ENCODE measurements at regions of chr1 and their contacts with region 1.

Region 1: DNA sequence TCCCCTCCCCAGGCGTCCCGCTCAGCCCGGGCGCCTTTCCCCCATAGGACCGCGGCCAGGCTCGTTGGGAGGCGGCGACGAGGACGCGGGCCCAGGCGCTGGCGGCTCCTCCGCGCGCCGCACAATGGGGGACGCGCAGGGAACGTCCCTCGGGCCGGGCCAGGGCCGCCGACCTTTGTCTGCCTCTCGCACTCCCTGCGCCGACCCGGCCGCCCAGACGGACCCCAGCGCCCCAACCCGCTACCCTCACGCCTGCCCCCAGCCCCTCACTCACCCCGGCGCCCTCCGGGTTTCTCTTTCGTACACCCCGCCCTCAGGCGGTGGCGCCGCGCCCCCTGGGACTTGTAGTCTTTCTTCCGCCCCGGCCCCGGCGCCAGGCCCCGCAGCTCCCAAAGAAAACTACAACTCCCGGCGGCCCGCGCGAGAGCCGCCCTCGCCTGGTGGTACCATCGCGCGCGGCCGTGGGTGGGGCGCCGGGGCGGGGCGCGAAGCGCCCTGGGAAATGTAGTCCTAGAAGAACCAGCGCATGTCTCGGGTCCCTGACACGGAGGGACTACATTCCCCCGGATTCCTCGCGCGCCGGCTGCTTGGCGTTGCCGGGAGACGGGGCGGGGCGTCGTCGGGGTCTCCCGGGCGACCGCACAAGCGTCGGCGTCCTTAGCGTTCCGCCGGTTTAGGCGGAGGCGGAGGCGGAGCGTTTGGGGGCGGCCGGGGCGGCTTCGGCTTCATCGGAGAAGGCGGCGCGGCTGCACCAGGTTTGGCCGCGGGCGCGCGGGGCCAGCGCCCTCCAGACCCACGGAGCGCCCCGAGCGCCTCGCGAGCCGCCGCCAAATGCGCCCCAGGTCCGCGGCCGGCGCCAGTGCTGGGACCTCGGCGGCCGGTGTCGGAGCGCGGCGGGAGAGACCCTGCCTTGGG is at the start of gene C1orf159:
- DNase-seq: peak; percentile 96 to 99 (median 98)
- ATAC-seq: peak; percentile 97
- H3K4me3 ChIP-seq: peak within 1 kb of the TSS; percentile 59
- H3K4me3 Mint-ChIP-seq: peak within 1 kb of the TSS; percentile 74 to 90 (median 86)
- H3K27ac ChIP-seq: peak within 1 kb of the TSS; percentile 76
- H3K27ac Mint-ChIP-seq: peak within 1 kb of the TSS in 7 of 9 donors; percentile 66 to 90 (median 77)
- H3K4me1 ChIP-seq: peaks cover 0 to 4% of the 10 kb centered on the region in 2 donors
- H3K4me1 Mint-ChIP-seq: peaks cover 0 to 20% (median 13%) of the 10 kb centered on the region in 7 donors
- H3K27me3 ChIP-seq: no peaks in the 10 kb centered on the region
- H3K27me3 Mint-ChIP-seq: peaks cover 0 to 13% (median 0%) of the 10 kb centered on the region in 5 donors
- total RNA-seq, gene C1orf159: 17.6 to 21.9 (median 19.6) TPM

Region 2: DNA sequence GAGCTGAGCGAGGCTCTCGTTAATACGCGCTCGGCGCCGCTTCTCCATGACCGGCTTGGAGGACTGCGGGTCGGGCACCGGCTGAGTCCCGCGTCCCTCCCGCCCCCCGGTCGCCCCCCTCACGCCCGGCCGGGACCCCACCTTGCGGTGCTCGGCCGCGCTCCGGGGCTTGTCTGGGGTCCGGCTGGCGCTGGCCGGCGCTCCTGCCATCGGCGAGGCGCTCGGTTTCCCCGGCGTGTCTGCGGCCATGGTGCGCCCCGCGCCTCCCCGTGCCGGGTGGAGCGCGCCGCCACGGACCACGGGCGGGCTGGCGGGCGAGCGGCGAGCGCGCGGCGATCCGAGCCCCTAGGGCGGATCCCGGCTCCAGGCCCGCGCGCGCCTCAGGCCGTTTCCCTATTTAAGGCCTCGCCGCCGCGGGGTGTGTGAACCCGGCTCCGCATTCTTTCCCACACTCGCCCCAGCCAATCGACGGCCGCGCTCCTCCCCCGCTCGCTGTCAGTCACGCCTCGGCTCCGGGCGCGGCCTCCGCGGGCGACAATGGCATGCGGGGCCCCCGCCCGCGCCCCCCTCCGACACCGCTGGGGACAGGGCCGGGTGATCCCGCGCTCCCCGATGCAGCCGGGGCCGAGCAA is 116.2 kb before region 1 on chr1 and contains the start of gene HES4:
- CTCF ChIA-PET with region 1: no interaction called
- POLR2A ChIA-PET with region 1: no interaction called
- intact Hi-C with region 1: loop called in 1 of 2 experiments (anchors 1 kb)
- DNase-seq: peak; percentile 44 to 76 (median 60)
- ATAC-seq: peak; percentile 67
- H3K4me3 ChIP-seq: peak within 1 kb of the TSS; percentile 42
- H3K4me3 Mint-ChIP-seq: peak within 1 kb of the TSS; percentile 64 to 87 (median 80)
- H3K27ac ChIP-seq: peak within 1 kb of the TSS; percentile 64
- H3K27ac Mint-ChIP-seq: peak within 1 kb of the TSS in 7 of 9 donors; percentile 46 to 96 (median 90)
- H3K4me1 ChIP-seq: peaks cover 12 to 18% of the 10 kb centered on the region in 2 donors
- H3K4me1 Mint-ChIP-seq: peaks cover 5 to 31% (median 12%) of the 10 kb centered on the region in 7 donors
- H3K27me3 ChIP-seq: peaks cover 3 to 15% of the 10 kb centered on the region in 2 donors
- H3K27me3 Mint-ChIP-seq: peaks cover 8 to 54% (median 17%) of the 10 kb centered on the region in 5 donors
- total RNA-seq, gene HES4: 0.22 to 35.0 (median 18.8) TPM in 3 of 5 experiments, not detected in the others

Region 3: DNA sequence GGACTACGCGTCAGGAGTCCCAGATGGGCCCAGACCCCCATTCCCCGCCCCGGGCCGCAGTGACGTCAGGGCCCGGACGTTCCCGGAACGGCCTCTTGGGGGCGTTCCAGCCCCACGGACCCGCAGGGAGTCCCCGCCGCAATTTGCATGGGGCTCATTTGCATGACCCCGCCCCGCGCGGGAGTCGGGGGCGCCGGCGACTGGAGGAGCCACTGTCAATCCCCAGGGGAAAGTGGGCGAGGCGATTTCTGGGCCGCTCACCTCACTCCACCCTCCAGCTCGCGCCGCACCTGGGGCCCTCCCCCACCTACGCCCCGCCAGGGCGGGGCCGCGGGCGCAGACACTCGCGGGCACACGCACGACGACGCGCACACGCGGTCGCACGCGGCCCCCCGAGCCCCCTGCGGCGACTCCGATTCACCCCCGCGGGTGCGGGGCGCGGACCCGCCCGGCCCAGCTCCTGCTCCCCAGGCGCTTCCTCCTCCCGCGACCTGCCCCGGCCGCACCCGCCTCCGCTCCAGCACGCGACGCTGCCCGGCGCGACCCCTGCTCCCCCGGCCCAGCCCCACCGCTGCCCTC is 82.9 kb before region 1 on chr1:
- CTCF ChIA-PET with region 1: no interaction called
- POLR2A ChIA-PET with region 1: no interaction called
- intact Hi-C with region 1: loop called (anchors 1 kb)
- DNase-seq: peak; percentile 67 to 93 (median 79)
- ATAC-seq: peak; percentile 94
- H3K4me3 ChIP-seq: peak overlapping the region; percentile 43
- H3K4me3 Mint-ChIP-seq: peak overlapping the region in 7 of 10 donors; percentile 39 to 76 (median 62)
- H3K27ac ChIP-seq: no peak overlapping the region
- H3K27ac Mint-ChIP-seq: peak overlapping the region in 1 of 9 donors; percentile 52
- H3K4me1 ChIP-seq: peaks cover 0 to 5% of the 10 kb centered on the region in 2 donors
- H3K4me1 Mint-ChIP-seq: peaks cover 0 to 8% (median 6%) of the 10 kb centered on the region in 7 donors
- H3K27me3 ChIP-seq: peaks cover 0 to 16% of the 10 kb centered on the region in 2 donors
- H3K27me3 Mint-ChIP-seq: peaks cover 3 to 23% (median 14%) of the 10 kb centered on the region in 5 donors

Region 4: DNA sequence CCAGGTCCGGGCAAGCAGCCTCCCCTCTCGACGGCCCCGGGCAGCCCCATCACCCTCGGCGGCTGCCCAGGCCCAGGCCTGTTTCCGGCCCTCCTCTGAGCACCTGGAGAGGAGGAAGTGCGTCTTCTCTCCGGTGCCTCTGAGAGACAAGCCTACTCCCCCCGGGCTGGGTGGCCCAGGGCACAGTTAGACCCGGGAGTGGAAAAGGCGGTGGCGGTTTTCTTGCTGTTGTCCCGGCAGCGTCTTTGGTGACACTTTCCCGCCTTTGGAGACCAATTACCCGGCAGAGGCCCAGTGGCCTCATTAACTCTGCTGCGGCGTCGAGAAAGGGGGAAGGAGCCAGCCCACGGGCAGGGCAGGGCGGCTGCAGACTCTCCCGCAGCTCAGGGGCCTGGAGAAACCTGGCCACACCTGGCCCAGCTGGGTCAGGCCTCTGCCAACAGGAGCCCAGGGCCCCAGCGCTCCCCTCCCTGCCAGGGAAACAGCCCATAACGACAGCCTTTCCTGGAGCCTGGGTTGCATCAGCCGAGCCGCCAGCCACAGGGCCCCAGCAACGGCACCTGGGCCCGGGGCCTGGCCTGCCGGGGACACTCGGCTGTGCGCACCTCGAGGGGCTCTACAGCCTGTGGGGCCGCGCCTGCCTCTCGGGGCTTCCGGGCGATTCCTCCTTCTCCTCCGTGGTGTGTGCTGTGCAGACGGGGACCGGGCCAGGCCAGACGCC is 28.2 kb after region 1 on chr1:
- CTCF ChIA-PET with region 1: no interaction called
- POLR2A ChIA-PET with region 1: interaction called, 3 read pairs
- intact Hi-C with region 1: loop called in 1 of 2 experiments (anchors 1 kb)
- DNase-seq: peak; percentile 40 to 79 (median 75)
- ATAC-seq: peak; percentile 93
- H3K4me3 ChIP-seq: no peak overlapping the region
- H3K4me3 Mint-ChIP-seq: peak overlapping the region; percentile 48 to 75 (median 61)
- H3K27ac ChIP-seq: peak overlapping the region; percentile 83
- H3K27ac Mint-ChIP-seq: peak overlapping the region; percentile 94 to 99 (median 96)
- H3K4me1 ChIP-seq: peaks cover 0 to 21% of the 10 kb centered on the region in 2 donors
- H3K4me1 Mint-ChIP-seq: peaks cover 6 to 21% (median 8%) of the 10 kb centered on the region in 7 donors
- H3K27me3 ChIP-seq: no peaks in the 10 kb centered on the region
- H3K27me3 Mint-ChIP-seq: no peaks in the 10 kb centered on the region

Region 5: GRCh38 chr1:1173793-1174415 is 57.9 kb after region 1 on chr1 and contains the start of gene TTLL10:
- CTCF ChIA-PET with region 1: no interaction called
- POLR2A ChIA-PET with region 1: no interaction called
- intact Hi-C with region 1: no loop called
- DNase-seq: peak in 7 of 9 donors; percentile 31 to 70 (median 54)
- ATAC-seq: peak; percentile 70
- H3K4me3 ChIP-seq: peak within 1 kb of the TSS; percentile 24
- H3K4me3 Mint-ChIP-seq: peak within 1 kb of the TSS in 7 of 10 donors; percentile 6 to 58 (median 33)
- H3K27ac ChIP-seq: no peak within 1 kb of the TSS
- H3K27ac Mint-ChIP-seq: peak within 1 kb of the TSS in 1 of 9 donors; percentile 49
- H3K4me1 ChIP-seq: peaks cover 6 to 18% of the 10 kb centered on the region in 2 donors
- H3K4me1 Mint-ChIP-seq: peaks cover 7 to 25% (median 9%) of the 10 kb centered on the region in 7 donors
- H3K27me3 ChIP-seq: no peaks in the 10 kb centered on the region
- H3K27me3 Mint-ChIP-seq: peaks cover 4 to 23% (median 4%) of the 10 kb centered on the region in 5 donors
- total RNA-seq, gene TTLL10: 0.58 to 0.80 TPM in 2 of 5 experiments, not detected in the others

Region 6: DNA sequence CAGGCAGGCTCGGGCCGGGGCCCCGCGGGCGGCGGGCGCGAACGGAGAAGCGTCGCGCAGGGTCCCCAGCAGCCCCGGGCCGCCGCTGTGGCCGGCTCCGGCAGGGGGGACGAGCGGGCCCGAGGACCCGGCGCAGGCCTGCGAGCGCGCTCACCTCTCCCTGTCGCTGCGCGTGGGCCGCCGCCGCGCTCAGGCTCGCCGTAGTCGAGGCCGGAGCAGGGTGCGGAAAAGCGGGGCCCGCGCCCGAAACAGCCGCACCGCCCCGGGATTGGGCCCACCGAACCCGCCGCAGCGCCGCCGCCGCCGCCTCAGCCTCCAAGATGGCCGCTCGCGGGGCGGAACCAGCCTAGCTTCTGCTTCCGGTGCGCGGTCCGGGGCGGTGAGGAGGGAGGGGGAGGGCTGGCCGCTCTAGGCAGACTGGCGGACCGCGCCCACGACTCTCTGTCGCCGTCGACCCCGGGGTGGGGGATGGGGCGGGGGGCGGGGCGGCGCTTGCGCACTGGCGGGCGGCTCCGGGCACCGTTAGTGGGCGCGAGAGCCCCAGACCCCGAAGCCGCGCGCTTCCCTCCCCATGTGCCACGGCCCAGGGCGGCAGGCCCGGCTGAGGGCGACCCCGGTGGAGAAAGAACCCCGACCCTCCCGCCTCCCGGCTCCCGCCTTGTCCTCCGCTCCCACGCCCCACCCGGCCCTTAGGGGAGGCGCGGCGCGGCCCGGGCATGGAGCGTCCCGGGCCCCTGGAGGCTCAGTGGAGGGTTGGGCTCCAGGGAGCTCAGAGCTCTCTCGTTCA is 157.7 kb after region 1 on chr1 and contains the start of gene UBE2J2:
- CTCF ChIA-PET with region 1: no interaction called
- POLR2A ChIA-PET with region 1: no interaction called
- intact Hi-C with region 1: loop called (anchors 1 kb)
- DNase-seq: peak; percentile 83 to 92 (median 90)
- ATAC-seq: peak; percentile 99
- H3K4me3 ChIP-seq: peak within 1 kb of the TSS; percentile 77
- H3K4me3 Mint-ChIP-seq: peak within 1 kb of the TSS; percentile 79 to 92 (median 88)
- H3K27ac ChIP-seq: peak within 1 kb of the TSS; percentile 90
- H3K27ac Mint-ChIP-seq: peak within 1 kb of the TSS; percentile 36 to 94 (median 83)
- H3K4me1 ChIP-seq: peaks cover 28 to 39% of the 10 kb centered on the region in 2 donors
- H3K4me1 Mint-ChIP-seq: peaks cover 21 to 45% (median 35%) of the 10 kb centered on the region in 7 donors
- H3K27me3 ChIP-seq: no peaks in the 10 kb centered on the region
- H3K27me3 Mint-ChIP-seq: no peaks in the 10 kb centered on the region
- total RNA-seq, gene UBE2J2: 62.3 to 89.3 (median 75.1) TPM

Region 7: DNA sequence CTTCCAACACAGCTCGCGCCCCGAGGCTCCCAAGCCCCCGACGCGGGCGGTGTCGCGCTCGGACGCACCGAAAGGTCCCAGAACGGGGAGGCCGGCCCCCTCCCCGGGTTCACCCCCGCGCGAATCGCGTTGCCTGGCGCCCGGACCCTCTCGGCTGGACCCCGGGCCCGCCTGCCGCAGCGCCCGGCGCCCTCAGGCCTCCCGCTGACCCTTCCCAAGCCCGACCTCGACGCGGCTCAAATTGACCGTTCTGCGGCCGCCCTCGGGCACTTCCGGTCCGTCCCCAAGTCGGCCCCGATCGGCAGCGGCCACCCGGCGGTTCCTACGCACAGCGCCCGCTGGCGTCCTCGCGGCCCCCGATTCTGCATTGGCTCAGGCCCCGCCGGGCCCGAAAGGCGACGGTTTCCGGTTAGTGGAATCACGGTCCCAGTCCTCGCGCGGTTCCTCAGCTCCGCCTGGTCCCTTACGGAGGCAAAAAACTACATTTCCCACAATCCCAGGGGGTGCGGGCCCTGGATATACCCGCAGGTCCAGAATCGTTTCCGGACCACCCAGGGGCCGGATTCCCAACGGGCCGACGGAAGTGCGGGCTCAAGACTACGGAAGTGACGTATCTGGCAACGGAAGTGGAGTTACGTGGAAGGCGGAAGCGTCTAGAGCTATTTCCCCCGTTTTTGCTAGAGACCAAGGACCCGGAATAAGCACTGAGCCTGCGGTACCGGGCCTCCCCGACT is 259.1 kb after region 1 on chr1 and contains the start of gene AURKAIP1:
- CTCF ChIA-PET with region 1: interaction called, 7 read pairs
- POLR2A ChIA-PET with region 1: interaction called, 3 read pairs
- intact Hi-C with region 1: loop called (anchors 1 kb)
- DNase-seq: peak; percentile 80 to 98 (median 96)
- ATAC-seq: peak; percentile 84
- H3K4me3 ChIP-seq: peak within 1 kb of the TSS; percentile 74
- H3K4me3 Mint-ChIP-seq: peak within 1 kb of the TSS; percentile 82 to 96 (median 94)
- H3K27ac ChIP-seq: peak within 1 kb of the TSS; percentile 88
- H3K27ac Mint-ChIP-seq: peak within 1 kb of the TSS; percentile 91 to 98 (median 97)
- H3K4me1 ChIP-seq: peaks cover 18 to 35% of the 10 kb centered on the region in 2 donors
- H3K4me1 Mint-ChIP-seq: peaks cover 0 to 37% (median 21%) of the 10 kb centered on the region in 7 donors
- H3K27me3 ChIP-seq: no peaks in the 10 kb centered on the region
- H3K27me3 Mint-ChIP-seq: peaks cover 0 to 2% (median 0%) of the 10 kb centered on the region in 5 donors
- total RNA-seq, gene AURKAIP1: 53.8 to 107 (median 64.5) TPM

Region 8: GRCh38 chr1:1615256-1616044 is 499.4 kb after region 1 on chr1 and contains the start of gene MIB2:
- CTCF ChIA-PET with region 1: no interaction called
- POLR2A ChIA-PET with region 1: no interaction called
- intact Hi-C with region 1: loop called in 1 of 2 experiments (anchors 10 kb)
- DNase-seq: peak; percentile 98 to 100 (median 99)
- ATAC-seq: peak; percentile 94
- H3K4me3 ChIP-seq: peak within 1 kb of the TSS; percentile 74
- H3K4me3 Mint-ChIP-seq: peak within 1 kb of the TSS; percentile 93 to 99 (median 96)
- H3K27ac ChIP-seq: peak within 1 kb of the TSS; percentile 100
- H3K27ac Mint-ChIP-seq: peak within 1 kb of the TSS; percentile 94 to 100 (median 99)
- H3K4me1 ChIP-seq: peaks cover 15 to 21% of the 10 kb centered on the region in 2 donors
- H3K4me1 Mint-ChIP-seq: peaks cover 18 to 36% (median 32%) of the 10 kb centered on the region in 7 donors
- H3K27me3 ChIP-seq: no peaks in the 10 kb centered on the region
- H3K27me3 Mint-ChIP-seq: no peaks in the 10 kb centered on the region
- total RNA-seq, gene MIB2: 45.6 to 129 (median 65.7) TPM

Measured in naive thymus-derived CD4-positive, alpha-beta T cell (primary cell).